Breast epithelium (tissue), 4 donors: ENCODE measurements at regions of chr12 and their contacts with region 1.

Region 1: GRCh38 chr12:110037315-110037714 is 11.0 kb downstream of the C12orf76 start:
- DNase-seq: no peak
- H3K4me3 ChIP-seq: no peak overlapping the region
- H3K27ac ChIP-seq: peak overlapping the region; percentile 72 to 85
- H3K4me1 ChIP-seq: no peaks in the 10 kb centered on the region
- H3K27me3 ChIP-seq: no peaks in the 10 kb centered on the region
- CTCF ChIP-seq: no peak
- POLR2A ChIP-seq: no peak

Region 2: GRCh38 chr12:110010853-110011723 is 26.2 kb before region 1 on chr12:
- intact Hi-C with region 1: loop called (anchors 2 kb)
- DNase-seq: no peak
- H3K4me3 ChIP-seq: no peak overlapping the region
- H3K27ac ChIP-seq: no peak overlapping the region
- H3K4me1 ChIP-seq: no peaks in the 10 kb centered on the region
- H3K27me3 ChIP-seq: no peaks in the 10 kb centered on the region
- CTCF ChIP-seq: no peak
- POLR2A ChIP-seq: no peak

Region 3: GRCh38 chr12:110234755-110235154 is 197.4 kb after region 1 on chr12:
- intact Hi-C with region 1: no loop called
- DNase-seq: no peak
- H3K4me3 ChIP-seq: no peak overlapping the region
- H3K27ac ChIP-seq: no peak overlapping the region
- H3K4me1 ChIP-seq: no peaks in the 10 kb centered on the region
- H3K27me3 ChIP-seq: no peaks in the 10 kb centered on the region
- CTCF ChIP-seq: no peak
- POLR2A ChIP-seq: no peak